HEK293 (cell line): ENCODE measurements at regions of chr3 and their contacts with region 1.

Region 1: GRCh38 chr3:158109804-158110657 is at the start of gene RSRC1:
- H3K4me3 ChIP-seq: peak within 1 kb of the TSS; percentile 99
- H3K27ac ChIP-seq: peak within 1 kb of the TSS; percentile 79
- H3K4me1 ChIP-seq: no peaks in the 10 kb centered on the region
- CTCF ChIP-seq: peak; percentile 30; the same call in 1 of the 2 replicates

Region 2: GRCh38 chr3:158167737-158168471 is 57.9 kb after region 1 on chr3:
- CTCF ChIA-PET with region 1: no interaction called
- POLR2A ChIA-PET with region 1: interaction called, 11 read pairs
- H3K4me3 ChIP-seq: no peak overlapping the region
- H3K27ac ChIP-seq: no peak overlapping the region
- H3K4me1 ChIP-seq: peaks cover 14% of the 10 kb centered on the region
- CTCF ChIP-seq: no peak